ENCODE measurements at regions of chr18 and their contacts with region 1.

Region 1: DNA sequence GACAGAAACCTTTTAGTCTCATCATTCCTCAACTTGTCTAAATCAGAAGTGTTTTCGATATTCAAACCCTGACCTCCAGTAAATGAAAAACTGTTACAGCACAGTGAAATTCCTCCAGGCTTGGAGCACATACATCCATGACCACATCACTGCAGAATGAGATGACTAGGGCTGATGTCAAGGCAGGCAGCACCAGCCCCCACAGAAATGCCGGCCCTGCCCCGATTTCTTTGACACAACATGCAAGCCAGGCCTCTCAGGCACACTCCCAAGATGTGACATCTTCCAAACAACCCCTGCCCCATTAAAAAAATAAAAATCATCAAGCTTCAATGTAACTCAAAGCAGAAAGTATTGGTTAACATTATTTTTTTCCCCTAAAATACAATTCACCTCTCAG is 103.3 kb downstream of the CTAGE1 start:
- DNase-seq: no peak
- H3K4me3 Mint-ChIP-seq: no peak overlapping the region
- H3K27ac Mint-ChIP-seq: no peak overlapping the region
- H3K4me1 Mint-ChIP-seq: no peaks in the 10 kb centered on the region
- H3K27me3 Mint-ChIP-seq: no peaks in the 10 kb centered on the region

Region 2: GRCh38 chr18:22378672-22379282 is 64.4 kb after region 1 on chr18:
- CTCF ChIA-PET with region 1: no interaction called
- POLR2A ChIA-PET with region 1: no interaction called
- intact Hi-C with region 1: loop called (anchors 10 kb)
- DNase-seq: peak; percentile 9
- H3K4me3 Mint-ChIP-seq: no peak overlapping the region
- H3K27ac Mint-ChIP-seq: no peak overlapping the region
- H3K4me1 Mint-ChIP-seq: no peaks in the 10 kb centered on the region
- H3K27me3 Mint-ChIP-seq: no peaks in the 10 kb centered on the region

Region 3: DNA sequence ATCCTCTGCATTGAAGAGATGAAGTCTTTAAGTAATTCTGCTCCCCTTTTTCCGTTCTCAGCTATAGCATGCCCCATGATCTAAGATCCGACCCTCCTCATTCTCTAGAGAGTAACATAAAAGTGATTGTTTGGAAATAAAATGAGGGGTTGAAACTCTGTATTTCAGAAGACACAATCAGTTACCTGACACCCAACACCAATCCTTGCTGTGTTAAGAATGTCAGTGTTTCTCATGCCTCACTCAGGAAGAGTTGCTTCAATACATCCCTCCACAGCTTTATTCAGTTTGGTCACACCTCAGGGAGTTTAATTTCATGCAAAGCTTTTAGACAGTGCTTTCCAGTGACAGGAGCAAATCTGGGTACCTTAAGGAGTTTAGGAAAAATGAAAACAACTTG is 568.8 kb after region 1 on chr18:
- CTCF ChIA-PET with region 1: no interaction called
- POLR2A ChIA-PET with region 1: no interaction called
- intact Hi-C with region 1: no loop called
- DNase-seq: no peak
- H3K4me3 Mint-ChIP-seq: no peak overlapping the region
- H3K27ac Mint-ChIP-seq: no peak overlapping the region
- H3K4me1 Mint-ChIP-seq: no peaks in the 10 kb centered on the region
- H3K27me3 Mint-ChIP-seq: peaks cover 16% of the 10 kb centered on the region

Measured in activated CD4-positive, alpha-beta memory T cell treated with anti-CD3 and anti-CD28 coated beads for 36 hours (primary cell).